ENCODE measurements at regions of chr10 and their contacts with region 1.

Region 1: DNA sequence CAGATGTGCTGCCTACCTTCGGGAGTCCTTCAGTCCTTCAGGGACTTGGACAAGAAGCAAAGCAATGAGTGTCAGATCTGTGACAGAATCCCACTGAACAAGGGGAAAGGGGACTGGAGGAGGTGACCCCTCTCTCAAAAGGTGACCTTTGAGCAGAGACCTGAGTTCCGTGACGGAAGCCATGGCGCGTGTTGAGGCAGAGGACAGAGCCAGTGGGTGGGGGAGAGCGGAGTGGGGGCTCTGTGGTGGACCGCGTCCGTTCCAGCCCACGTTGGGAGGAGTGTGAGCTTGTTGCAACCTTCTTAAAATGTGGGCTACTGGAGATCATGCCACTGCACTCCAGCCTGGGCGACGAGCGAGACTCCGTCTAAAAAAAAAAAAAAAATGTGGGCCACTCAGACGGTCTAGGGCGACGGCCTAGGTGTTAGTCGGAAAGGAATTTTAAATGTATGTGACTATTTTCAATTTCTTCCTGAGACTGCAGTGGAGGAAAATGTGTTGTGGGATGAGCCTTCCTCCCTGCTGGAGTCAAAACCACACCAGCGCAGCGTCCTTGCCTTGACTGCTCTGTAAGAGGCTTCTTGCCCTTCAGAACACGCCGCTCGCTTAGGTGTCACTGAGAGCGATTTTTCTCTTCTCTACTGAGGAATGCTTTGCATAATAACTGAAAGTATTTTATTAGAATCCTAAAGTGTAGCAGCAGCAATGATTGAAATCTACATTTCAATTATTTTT is 272.7 kb downstream of the CELF2 start:
- DNase-seq: no peak
- ATAC-seq: no peak
- H3K4me3 ChIP-seq: no peak overlapping the region
- H3K27ac ChIP-seq: no peak overlapping the region
- H3K4me1 ChIP-seq: no peaks in the 10 kb centered on the region
- H3K27me3 ChIP-seq: no peaks in the 10 kb centered on the region
- CTCF ChIP-seq: no peak
- POLR2A ChIP-seq: no peak
- RAD21 ChIP-seq: no peak

Region 2: GRCh38 chr10:11373619-11374235 is 83.4 kb after region 1 on chr10:
- CTCF ChIA-PET with region 1: interaction called, 10 read pairs
- POLR2A ChIA-PET with region 1: no interaction called
- dilution Hi-C with region 1: no loop called
- in situ Hi-C with region 1: no loop called
- intact Hi-C with region 1: no loop called
- DNase-seq: no peak
- ATAC-seq: no peak
- H3K4me3 ChIP-seq: no peak overlapping the region
- H3K27ac ChIP-seq: no peak overlapping the region
- H3K4me1 ChIP-seq: no peaks in the 10 kb centered on the region
- H3K27me3 ChIP-seq: no peaks in the 10 kb centered on the region
- CTCF ChIP-seq: no peak
- POLR2A ChIP-seq: no peak
- RAD21 ChIP-seq: no peak